ENCODE measurements at regions of chr4 and their contacts with region 1.

Region 1: GRCh38 chr4:184279496-184280061 is 61.9 kb upstream of the ENPP6 start:
- DNase-seq: no peak
- H3K4me3 ChIP-seq: no peak overlapping the region
- H3K27ac ChIP-seq: no peak overlapping the region
- H3K4me1 ChIP-seq: no peaks in the 10 kb centered on the region
- H3K27me3 ChIP-seq: no peaks in the 10 kb centered on the region
- CTCF ChIP-seq: no peak

Region 2: GRCh38 chr4:184641451-184641850 is 361.9 kb after region 1 on chr4:
- CTCF ChIA-PET with region 1: no interaction called
- POLR2A ChIA-PET with region 1: interaction called, 10 read pairs
- intact Hi-C with region 1: no loop called
- DNase-seq: no peak
- H3K4me3 ChIP-seq: no peak overlapping the region
- H3K27ac ChIP-seq: no peak overlapping the region
- H3K4me1 ChIP-seq: 0 out of 2 replicates have a peak, but pooled peaks cover under 1% of the 10 kb centered on the region
- H3K27me3 ChIP-seq: no peaks in the 10 kb centered on the region
- CTCF ChIP-seq: no peak

Measured in PC-9 (cell line).